Dorsolateral prefrontal cortex (tissue), 120 donors: ENCODE measurements at regions of chr18 and their contacts with region 1.

Region 1: GRCh38 chr18:57209713-57210661 is 63.1 kb downstream of the BOD1L2 start:
- DNase-seq: peak in 8 of 10 donors; percentile 38 to 80 (median 66)
- H3K4me3 ChIP-seq: peak overlapping the region in 36 of 59 donors; percentile 3 to 54 (median 27)
- H3K27ac ChIP-seq: peak overlapping the region in 18 of 59 donors; percentile 1 to 71 (median 41)
- H3K27me3 ChIP-seq: peaks cover 0 to 26% (median 0%) of the 10 kb centered on the region in 45 donors
- CTCF ChIP-seq: no peak

Region 2: GRCh38 chr18:56890632-56891031 is 319.4 kb before region 1 on chr18:
- intact Hi-C with region 1: loop called in 1 of 2 experiments (anchors 5 kb)
- DNase-seq: peak in 1 of 10 donors; percentile 28
- H3K4me3 ChIP-seq: peak overlapping the region in 27 of 59 donors; percentile 1 to 45 (median 20)
- H3K27ac ChIP-seq: peak overlapping the region in 52 of 59 donors; percentile 4 to 87 (median 64)
- H3K27me3 ChIP-seq: no peaks in the 10 kb centered on the region
- CTCF ChIP-seq: no peak

Region 3: DNA sequence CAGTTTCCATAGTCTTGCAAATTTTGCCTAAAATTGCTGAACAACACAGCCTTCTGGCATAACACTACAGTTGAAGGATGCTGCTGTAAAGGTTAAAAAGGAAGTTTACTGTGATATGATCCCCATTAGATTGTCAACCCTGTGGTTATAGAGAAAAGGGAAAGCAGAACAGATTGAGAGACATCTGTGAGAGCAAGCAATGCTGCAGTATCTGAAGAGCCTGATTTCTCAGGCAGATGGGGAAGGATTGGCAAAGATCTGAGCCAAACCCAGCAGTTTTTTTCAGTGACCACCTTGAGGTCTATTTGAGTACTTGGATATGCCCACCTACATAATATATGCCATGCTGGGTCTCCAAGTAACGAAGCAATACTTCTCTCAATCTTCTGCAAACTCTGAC is 133.8 kb after region 1 on chr18:
- intact Hi-C with region 1: loop called in 1 of 2 experiments (anchors 10 kb)
- DNase-seq: no peak
- H3K4me3 ChIP-seq: no peak overlapping the region
- H3K27ac ChIP-seq: peak overlapping the region in 10 of 59 donors; percentile 9 to 58 (median 28)
- H3K27me3 ChIP-seq: peaks cover 0 to 11% (median 0%) of the 10 kb centered on the region in 45 donors
- CTCF ChIP-seq: no peak